Calu3 (cell line): ENCODE measurements at regions of chr1 and their contacts with region 1.

Region 1: GRCh38 chr1:42035830-42036604 is 117.2 kb upstream of the GUCA2B start:
- DNase-seq: peak; percentile 97
- H3K4me3 Mint-ChIP-seq: peak overlapping the region; percentile 87
- H3K27ac Mint-ChIP-seq: no peak overlapping the region
- H3K4me1 Mint-ChIP-seq: peaks cover 35% of the 10 kb centered on the region
- H3K27me3 Mint-ChIP-seq: no peaks in the 10 kb centered on the region
- CTCF ChIP-seq: no peak

Region 2: GRCh38 chr1:41812051-41812450 is 224.0 kb before region 1 on chr1:
- CTCF ChIA-PET with region 1: no interaction called
- intact Hi-C with region 1: loop called (anchors 10 kb)
- DNase-seq: peak; percentile 74
- H3K4me3 Mint-ChIP-seq: no peak overlapping the region
- H3K27ac Mint-ChIP-seq: no peak overlapping the region
- H3K4me1 Mint-ChIP-seq: peaks cover 15% of the 10 kb centered on the region
- H3K27me3 Mint-ChIP-seq: no peaks in the 10 kb centered on the region
- CTCF ChIP-seq: peak; percentile 66

Region 3: DNA sequence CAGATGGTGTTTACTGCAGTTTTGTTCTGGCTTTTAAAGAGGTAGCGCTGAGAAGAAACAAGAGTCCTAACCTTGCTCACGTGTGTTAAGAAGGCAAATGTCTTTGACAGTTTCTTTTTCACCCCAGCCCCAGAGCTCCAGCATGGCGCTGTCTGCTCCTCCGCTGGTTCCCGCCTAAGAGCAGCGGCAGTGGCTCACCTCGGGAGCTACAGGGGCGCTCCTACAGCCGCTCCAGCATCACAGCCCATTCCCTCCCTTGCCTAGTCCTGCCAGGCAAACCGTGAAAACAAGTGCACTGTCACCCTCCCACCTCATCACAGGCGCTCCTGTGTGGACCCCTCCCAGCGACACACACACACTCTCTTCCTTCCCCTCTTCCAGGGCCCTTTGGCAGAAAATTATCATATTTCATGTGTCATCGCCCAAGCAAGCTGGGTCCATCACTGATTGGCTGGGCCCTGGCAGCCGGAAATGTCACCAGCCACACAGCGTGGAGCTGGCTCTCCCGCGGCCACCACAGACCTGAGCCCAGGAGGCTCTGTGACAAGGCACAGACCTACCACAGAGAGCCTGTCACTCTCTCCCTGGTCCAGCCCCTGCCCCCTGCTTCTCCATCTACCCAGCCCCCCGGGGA is 116.1 kb before region 1 on chr1:
- CTCF ChIA-PET with region 1: interaction called, 3 read pairs
- intact Hi-C with region 1: loop called (anchors 10 kb)
- DNase-seq: peak; percentile 83
- H3K4me3 Mint-ChIP-seq: peak overlapping the region; percentile 80
- H3K27ac Mint-ChIP-seq: peak overlapping the region; percentile 58
- H3K4me1 Mint-ChIP-seq: peaks cover 54% of the 10 kb centered on the region
- H3K27me3 Mint-ChIP-seq: no peaks in the 10 kb centered on the region
- CTCF ChIP-seq: no peak

Region 4: DNA sequence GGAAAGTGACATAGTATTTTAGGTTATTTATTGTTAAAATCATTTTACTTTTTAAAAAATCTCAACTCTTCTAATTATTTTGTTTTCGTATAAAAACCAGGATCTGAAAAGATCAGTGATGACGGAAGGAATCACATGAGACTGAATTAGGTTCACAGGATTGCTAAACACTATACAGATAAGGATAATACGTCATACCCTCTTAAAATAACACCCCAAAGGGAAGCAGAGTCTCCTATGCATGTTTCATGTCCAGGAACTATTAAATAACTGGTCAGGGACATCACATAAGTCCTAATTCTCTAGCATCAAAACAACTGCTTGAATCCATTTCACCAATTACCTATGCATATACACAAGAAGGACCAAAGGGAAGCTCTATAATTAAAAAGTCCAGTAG is 214.1 kb after region 1 on chr1:
- CTCF ChIA-PET with region 1: no interaction called
- intact Hi-C with region 1: no loop called
- DNase-seq: no peak
- H3K4me3 Mint-ChIP-seq: no peak overlapping the region
- H3K27ac Mint-ChIP-seq: no peak overlapping the region
- H3K4me1 Mint-ChIP-seq: peaks cover 8% of the 10 kb centered on the region
- H3K27me3 Mint-ChIP-seq: no peaks in the 10 kb centered on the region
- CTCF ChIP-seq: no peak